Sigmoid colon (tissue), 7 donors: ENCODE measurements at regions of chr10 and their contacts with region 1.

Region 1: GRCh38 chr10:43913676-43914385 is 265.1 kb upstream of the ZNF32 start:
- DNase-seq: no peak
- H3K4me3 ChIP-seq: no peak overlapping the region
- H3K27ac ChIP-seq: no peak overlapping the region
- H3K4me1 ChIP-seq: peaks cover 0 to 21% (median 18%) of the 10 kb centered on the region in 4 donors
- H3K27me3 ChIP-seq: no peaks in the 10 kb centered on the region
- CTCF ChIP-seq: no peak
- EP300 ChIP-seq: no peak
- POLR2A ChIP-seq: no peak

Region 2: GRCh38 chr10:43683451-43684291 is 230.2 kb before region 1 on chr10:
- intact Hi-C with region 1: no loop called
- DNase-seq: no peak
- H3K4me3 ChIP-seq: no peak overlapping the region
- H3K27ac ChIP-seq: no peak overlapping the region
- H3K4me1 ChIP-seq: peaks cover 0 to 26% (median 15%) of the 10 kb centered on the region in 4 donors
- H3K27me3 ChIP-seq: no peaks in the 10 kb centered on the region
- CTCF ChIP-seq: no peak
- EP300 ChIP-seq: no peak
- POLR2A ChIP-seq: no peak

Region 3: DNA sequence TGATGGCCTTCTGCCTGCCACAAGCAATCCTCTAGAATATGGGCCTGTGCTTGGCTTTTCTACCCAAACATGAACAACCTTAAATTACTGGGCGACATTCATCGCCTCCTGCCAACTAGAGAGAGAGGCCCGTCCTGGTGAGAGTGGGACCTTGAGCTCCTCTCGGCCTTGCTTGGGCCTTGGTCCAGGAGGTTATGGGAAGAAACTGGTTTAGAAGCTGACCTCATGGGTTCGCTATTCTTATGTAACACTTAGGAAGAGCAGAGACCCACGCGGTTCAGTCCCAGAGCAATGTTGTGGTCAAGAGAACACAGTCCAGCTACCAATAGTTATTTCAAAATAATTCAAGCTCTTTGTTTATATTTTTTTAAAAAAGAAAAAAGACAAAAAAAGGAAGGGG is 88.9 kb before region 1 on chr10:
- intact Hi-C with region 1: loop called (anchors 5 kb)
- DNase-seq: peak; percentile 82
- H3K4me3 ChIP-seq: no peak overlapping the region
- H3K27ac ChIP-seq: peak overlapping the region; percentile 56 to 77 (median 66)
- H3K4me1 ChIP-seq: peaks cover 0 to 46% (median 24%) of the 10 kb centered on the region in 4 donors
- H3K27me3 ChIP-seq: no peaks in the 10 kb centered on the region
- CTCF ChIP-seq: no peak
- EP300 ChIP-seq: no peak
- POLR2A ChIP-seq: no peak

Region 4: GRCh38 chr10:43939939-43940820 is 26.3 kb after region 1 on chr10:
- intact Hi-C with region 1: no loop called
- DNase-seq: no peak
- H3K4me3 ChIP-seq: no peak overlapping the region
- H3K27ac ChIP-seq: no peak overlapping the region
- H3K4me1 ChIP-seq: peaks cover 0 to 7% (median 0%) of the 10 kb centered on the region in 4 donors
- H3K27me3 ChIP-seq: no peaks in the 10 kb centered on the region
- CTCF ChIP-seq: no peak
- EP300 ChIP-seq: no peak
- POLR2A ChIP-seq: no peak